AG04450 (cell line): ENCODE measurements at regions of chrX and their contacts with region 1.

Region 1: GRCh38 chrX:65581661-65582339 is 47.2 kb upstream of the LAS1L start:
- DNase-seq: peak; percentile 16
- H3K4me3 ChIP-seq: no peak overlapping the region
- H3K27ac ChIP-seq: no peak overlapping the region
- H3K27me3 ChIP-seq: no peaks in the 10 kb centered on the region
- CTCF ChIP-seq: peak; percentile 70

Region 2: DNA sequence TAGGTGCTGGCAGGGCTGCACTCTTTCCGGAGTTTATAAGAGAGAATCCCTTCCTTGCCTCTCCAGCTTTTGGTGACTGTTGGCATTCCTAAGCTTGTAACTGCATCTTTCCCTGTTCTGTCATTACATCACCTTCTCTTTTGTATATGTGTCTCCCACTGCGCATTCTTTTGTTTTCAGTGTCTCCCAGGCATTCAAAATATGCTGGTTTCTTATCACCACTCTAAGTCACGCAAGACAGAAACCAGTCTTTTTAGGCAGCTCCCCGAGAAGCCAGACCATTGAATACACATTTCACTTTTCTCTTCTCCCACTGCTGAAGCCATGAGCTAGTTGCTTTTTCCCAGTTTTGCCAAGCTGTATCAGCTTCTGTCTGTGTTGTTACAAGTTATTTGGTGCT is 118.2 kb before region 1 on chrX:
- CTCF ChIA-PET with region 1: no interaction called
- POLR2A ChIA-PET with region 1: no interaction called
- DNase-seq: no peak
- H3K4me3 ChIP-seq: no peak overlapping the region
- H3K27ac ChIP-seq: no peak overlapping the region
- H3K27me3 ChIP-seq: no peaks in the 10 kb centered on the region
- CTCF ChIP-seq: no peak

Region 3: DNA sequence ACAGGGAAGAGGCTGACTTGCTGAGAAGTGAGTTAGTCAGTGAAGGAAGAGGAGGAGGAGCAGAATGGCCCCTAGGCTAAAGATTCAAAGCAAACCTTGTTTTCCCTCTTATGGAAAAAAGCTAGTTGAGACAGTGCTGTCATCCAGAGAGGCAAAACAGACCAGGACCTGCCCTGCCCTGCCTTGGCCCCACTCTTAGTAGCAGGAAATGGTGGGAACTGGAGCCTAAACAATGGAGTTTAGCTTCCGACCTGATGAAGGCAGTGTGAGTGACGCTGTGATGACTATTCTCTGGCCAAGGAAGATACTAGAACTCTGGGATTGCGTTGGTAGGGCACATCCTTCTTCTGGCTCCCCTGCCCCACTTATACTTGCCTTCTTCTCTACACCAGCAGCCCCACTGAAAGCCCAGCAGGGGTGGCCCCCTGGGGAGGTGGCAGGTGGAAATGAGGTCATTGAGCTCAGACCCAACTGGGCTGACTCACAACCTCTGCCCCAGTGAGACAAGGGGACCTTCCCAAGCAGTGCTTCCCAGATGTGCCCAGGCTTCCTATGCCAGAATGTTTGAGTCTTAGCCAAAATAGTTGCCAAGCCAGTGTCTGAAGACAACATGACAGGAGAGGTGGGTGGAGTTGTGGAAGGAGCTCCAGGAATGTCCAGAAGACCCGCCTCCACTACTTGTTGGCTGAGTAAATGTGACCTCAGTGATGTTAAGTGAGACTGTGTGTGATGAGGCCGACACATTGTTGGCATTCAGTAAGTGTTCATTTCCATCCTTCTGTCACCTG is 124.4 kb after region 1 on chrX:
- CTCF ChIA-PET with region 1: no interaction called
- POLR2A ChIA-PET with region 1: no interaction called
- DNase-seq: no peak
- H3K4me3 ChIP-seq: no peak overlapping the region
- H3K27ac ChIP-seq: peak overlapping the region; percentile 90
- H3K27me3 ChIP-seq: no peaks in the 10 kb centered on the region
- CTCF ChIP-seq: no peak

Region 4: DNA sequence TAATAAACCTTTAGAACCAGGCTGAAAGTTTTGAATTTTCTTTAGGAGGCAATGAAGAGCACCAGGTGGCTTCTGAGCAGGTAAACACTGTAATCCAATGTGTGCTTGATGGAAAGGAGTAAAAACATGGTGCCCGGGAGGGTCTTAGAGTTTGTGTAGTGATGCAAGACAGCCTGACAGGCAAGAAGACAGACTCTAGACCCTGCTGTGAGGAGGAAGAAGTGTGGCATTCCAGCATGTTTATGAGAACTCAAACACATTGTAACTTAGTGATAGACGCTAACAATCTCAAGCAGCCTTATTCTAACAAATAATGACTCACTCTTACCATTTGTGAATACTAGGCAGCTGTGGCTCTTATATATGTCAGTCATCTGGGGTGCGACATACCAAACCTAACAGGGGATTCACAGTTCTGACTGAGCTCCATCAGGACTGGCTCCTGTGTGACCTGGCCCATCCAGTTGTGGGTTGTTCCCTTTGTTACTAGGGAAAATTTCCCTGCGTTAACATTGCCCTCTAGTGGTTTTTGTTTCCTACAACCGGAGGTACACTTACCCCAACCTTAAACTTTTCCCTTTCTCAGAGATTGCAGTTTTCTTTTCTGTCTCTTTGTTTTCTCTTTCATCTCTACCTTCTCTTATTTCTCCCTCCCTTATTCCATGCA is 404.3 kb after region 1 on chrX:
- CTCF ChIA-PET with region 1: interaction called, 36 read pairs
- POLR2A ChIA-PET with region 1: interaction called, 4 read pairs
- DNase-seq: peak; percentile 3
- H3K4me3 ChIP-seq: no peak overlapping the region
- H3K27ac ChIP-seq: no peak overlapping the region
- H3K27me3 ChIP-seq: no peaks in the 10 kb centered on the region
- CTCF ChIP-seq: peak; percentile 54